CD8-positive, alpha-beta T cell (primary cell): ENCODE measurements at regions of chr11 and their contacts with region 1.

Region 1: GRCh38 chr11:119095066-119095880 is 6.4 kb downstream of the DPAGT1 start:
- DNase-seq: peak; percentile 98 to 100 (median 99)
- ATAC-seq: peak; percentile 86
- H3K4me3 ChIP-seq: peak overlapping the region; percentile 78 to 88
- H3K4me3 Mint-ChIP-seq: peak overlapping the region; percentile 93
- H3K27ac ChIP-seq: peak overlapping the region; percentile 75 to 78
- H3K27ac Mint-ChIP-seq: peak overlapping the region; percentile 91
- H3K4me1 ChIP-seq: peaks cover 23% of the 10 kb centered on the region
- H3K4me1 Mint-ChIP-seq: peaks cover 34% of the 10 kb centered on the region
- H3K27me3 ChIP-seq: no peaks in the 10 kb centered on the region
- H3K27me3 Mint-ChIP-seq: no peaks in the 10 kb centered on the region
- CTCF ChIP-seq: no peak

Region 2: DNA sequence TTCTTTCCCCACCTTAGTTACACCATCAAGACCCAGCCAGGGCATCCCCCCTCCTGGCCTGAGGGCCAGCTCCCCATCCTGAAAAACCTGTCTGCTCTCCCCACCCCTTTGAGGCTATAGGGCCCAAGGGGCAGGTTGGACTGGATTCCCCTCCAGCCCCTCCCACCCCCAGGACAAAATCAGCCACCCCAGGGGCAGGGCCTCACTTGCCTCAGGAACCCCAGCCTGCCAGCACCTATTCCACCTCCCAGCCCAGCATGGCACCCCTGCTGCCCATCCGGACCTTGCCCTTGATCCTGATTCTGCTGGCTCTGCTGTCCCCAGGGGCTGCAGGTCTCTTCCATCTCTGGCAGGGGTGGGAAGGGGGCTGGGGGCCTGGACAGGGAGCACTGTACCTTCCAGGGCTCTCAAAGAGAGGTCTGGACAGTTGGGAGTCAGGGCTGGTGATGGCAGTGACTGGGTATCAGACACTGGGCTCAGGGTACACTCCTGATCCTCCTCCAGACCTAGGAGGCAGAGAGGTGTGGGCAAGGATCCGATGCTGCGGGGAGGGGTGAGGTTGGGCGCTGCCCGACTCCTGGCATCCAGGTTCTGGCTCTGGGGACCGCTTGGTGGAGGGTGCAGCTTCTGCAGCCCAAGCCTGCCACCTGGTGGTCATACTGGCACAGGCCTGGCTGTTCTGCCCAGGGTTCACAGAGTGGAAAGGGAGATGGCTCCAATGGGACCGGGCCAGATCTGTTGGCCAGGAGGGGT is 139.0 kb before region 1 on chr11 and contains the start of gene UPK2:
- CTCF ChIA-PET with region 1: no interaction called
- POLR2A ChIA-PET with region 1: no interaction called
- intact Hi-C with region 1: no loop called
- DNase-seq: peak; percentile 80 to 94 (median 88)
- ATAC-seq: peak; percentile 99
- H3K4me3 ChIP-seq: no peak within 1 kb of the TSS
- H3K4me3 Mint-ChIP-seq: no peak within 1 kb of the TSS
- H3K27ac ChIP-seq: no peak within 1 kb of the TSS
- H3K27ac Mint-ChIP-seq: peak within 1 kb of the TSS; percentile 35
- H3K4me1 ChIP-seq: peaks cover 7% of the 10 kb centered on the region
- H3K4me1 Mint-ChIP-seq: peaks cover 6% of the 10 kb centered on the region
- H3K27me3 ChIP-seq: no peaks in the 10 kb centered on the region
- H3K27me3 Mint-ChIP-seq: peaks cover 2% of the 10 kb centered on the region
- CTCF ChIP-seq: peak; percentile 82
- total RNA-seq, gene UPK2: not detected

Region 3: GRCh38 chr11:119018074-119018938 is 77.0 kb before region 1 on chr11 and contains the starts of genes RPS25 and TRAPPC4:
- CTCF ChIA-PET with region 1: interaction called, 3 read pairs
- POLR2A ChIA-PET with region 1: interaction called, 4 read pairs
- intact Hi-C with region 1: loop called (anchors 1 kb)
- DNase-seq: peak; percentile 90 to 99 (median 95)
- ATAC-seq: peak; percentile 86
- H3K4me3 ChIP-seq: peak within 1 kb of the TSS; percentile 98
- H3K4me3 Mint-ChIP-seq: peak within 1 kb of the TSS; percentile 99
- H3K27ac ChIP-seq: peak within 1 kb of the TSS; percentile 98 to 99
- H3K27ac Mint-ChIP-seq: peak within 1 kb of the TSS; percentile 99
- H3K4me1 ChIP-seq: peaks cover 44% of the 10 kb centered on the region
- H3K4me1 Mint-ChIP-seq: peaks cover 55% of the 10 kb centered on the region
- H3K27me3 ChIP-seq: no peaks in the 10 kb centered on the region
- H3K27me3 Mint-ChIP-seq: no peaks in the 10 kb centered on the region
- CTCF ChIP-seq: no peak
- total RNA-seq, gene RPS25: 2,737 to 2,869 TPM
- total RNA-seq, gene TRAPPC4: 65.6 to 73.3 TPM

Region 4: GRCh38 chr11:119067371-119068222 is 27.7 kb before region 1 on chr11 and contains the start of gene VPS11:
- CTCF ChIA-PET with region 1: interaction called, 8 read pairs
- POLR2A ChIA-PET with region 1: interaction called, 31 read pairs
- intact Hi-C with region 1: loop called (anchors 1 kb)
- DNase-seq: peak; percentile 94 to 99 (median 98)
- ATAC-seq: peak; percentile 92
- H3K4me3 ChIP-seq: peak within 1 kb of the TSS; percentile 83 to 88
- H3K4me3 Mint-ChIP-seq: peak within 1 kb of the TSS; percentile 89
- H3K27ac ChIP-seq: peak within 1 kb of the TSS; percentile 79 to 94
- H3K27ac Mint-ChIP-seq: peak within 1 kb of the TSS; percentile 97
- H3K4me1 ChIP-seq: peaks cover 29% of the 10 kb centered on the region
- H3K4me1 Mint-ChIP-seq: peaks cover 51% of the 10 kb centered on the region
- H3K27me3 ChIP-seq: no peaks in the 10 kb centered on the region
- H3K27me3 Mint-ChIP-seq: no peaks in the 10 kb centered on the region
- CTCF ChIP-seq: no peak
- total RNA-seq, gene VPS11: 91.0 to 109 TPM

Region 5: GRCh38 chr11:119121008-119121810 is 25.9 kb after region 1 on chr11 and contains the start of gene HINFP:
- CTCF ChIA-PET with region 1: interaction called, 5 read pairs
- POLR2A ChIA-PET with region 1: interaction called, 16 read pairs
- intact Hi-C with region 1: loop called (anchors 1 kb)
- DNase-seq: peak; percentile 100
- ATAC-seq: peak; percentile 97
- H3K4me3 ChIP-seq: peak within 1 kb of the TSS; percentile 81 to 93
- H3K4me3 Mint-ChIP-seq: peak within 1 kb of the TSS; percentile 87
- H3K27ac ChIP-seq: peak within 1 kb of the TSS; percentile 69 to 80
- H3K27ac Mint-ChIP-seq: peak within 1 kb of the TSS; percentile 92
- H3K4me1 ChIP-seq: peaks cover 24% of the 10 kb centered on the region
- H3K4me1 Mint-ChIP-seq: peaks cover 43% of the 10 kb centered on the region
- H3K27me3 ChIP-seq: no peaks in the 10 kb centered on the region
- H3K27me3 Mint-ChIP-seq: no peaks in the 10 kb centered on the region
- CTCF ChIP-seq: no peak
- total RNA-seq, gene HINFP: 17.0 to 19.5 TPM

Region 6: GRCh38 chr11:119205574-119206510 is 110.6 kb after region 1 on chr11 and contains the start of gene CBL:
- CTCF ChIA-PET with region 1: interaction called, 5 read pairs
- POLR2A ChIA-PET with region 1: interaction called, 3 read pairs
- intact Hi-C with region 1: loop called in 1 of 2 experiments (anchors 2 kb)
- DNase-seq: peak; percentile 94 to 100 (median 98)
- ATAC-seq: peak; percentile 91
- H3K4me3 ChIP-seq: peak within 1 kb of the TSS; percentile 93 to 94
- H3K4me3 Mint-ChIP-seq: peak within 1 kb of the TSS; percentile 97
- H3K27ac ChIP-seq: peak within 1 kb of the TSS; percentile 61 to 79
- H3K27ac Mint-ChIP-seq: peak within 1 kb of the TSS; percentile 93
- H3K4me1 ChIP-seq: peaks cover 24% of the 10 kb centered on the region
- H3K4me1 Mint-ChIP-seq: peaks cover 44% of the 10 kb centered on the region
- H3K27me3 ChIP-seq: no peaks in the 10 kb centered on the region
- H3K27me3 Mint-ChIP-seq: no peaks in the 10 kb centered on the region
- CTCF ChIP-seq: peak; percentile 70
- total RNA-seq, gene CBL: 13.5 to 13.8 TPM